ENCODE measurements at regions of chr17 and their contacts with region 1.

Region 1: DNA sequence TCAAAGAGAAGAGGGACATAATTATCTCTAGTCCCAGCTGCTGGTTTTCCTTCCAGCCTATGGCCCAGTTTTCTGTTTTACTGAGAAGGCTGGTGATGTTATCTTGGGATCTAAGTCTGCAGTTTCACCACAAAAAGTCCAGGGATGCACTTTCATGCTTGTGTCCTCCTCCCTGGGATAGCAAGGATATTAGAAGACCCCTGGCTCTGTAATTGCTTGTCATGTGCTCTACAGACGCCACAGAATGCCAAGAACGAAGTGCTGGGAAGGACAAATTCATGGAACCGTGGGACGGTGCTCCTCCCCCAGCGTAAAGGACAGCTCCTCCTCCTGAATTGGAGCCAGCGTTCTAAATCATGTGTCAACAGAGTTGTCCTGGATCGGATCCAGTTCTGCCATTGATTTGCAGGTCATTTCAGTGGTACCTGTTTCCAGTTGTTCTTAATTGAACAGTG is 8.6 kb downstream of the MAPT start:
- DNase-seq: peak; percentile 53 to 74
- ATAC-seq: peak; percentile 38 to 42
- H3K4me3 ChIP-seq: peak overlapping the region in 3 of 4 donors; percentile 3 to 24 (median 22)
- H3K27ac ChIP-seq: peak overlapping the region; percentile 94 to 99 (median 99)
- H3K4me1 ChIP-seq: peaks cover 78 to 89% of the 10 kb centered on the region in 2 donors
- H3K27me3 ChIP-seq: no peaks in the 10 kb centered on the region
- CTCF ChIP-seq: no peak
- POLR2A ChIP-seq: no peak

Region 2: DNA sequence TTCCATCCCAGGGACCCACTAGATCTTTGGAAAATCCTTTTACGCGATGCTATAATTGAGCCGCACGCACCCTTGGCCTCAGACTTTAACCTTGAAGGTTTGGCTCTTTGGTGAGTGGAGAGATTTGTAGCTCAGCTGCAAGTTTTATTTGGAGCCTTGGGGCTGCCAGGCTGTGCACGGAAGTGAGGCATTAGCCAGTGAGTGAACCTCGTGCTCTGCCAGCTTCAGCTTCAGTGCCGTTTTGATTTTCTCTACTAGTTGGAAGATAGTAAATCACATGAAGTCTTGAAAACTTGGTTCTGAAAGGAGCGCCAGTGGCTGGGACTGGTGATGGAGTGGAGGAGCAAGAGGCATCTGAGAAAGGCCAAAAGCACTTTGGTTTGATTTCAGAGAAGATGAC is 101.5 kb before region 1 on chr17:
- in situ Hi-C with region 1: no loop called
- intact Hi-C with region 1: no loop called
- DNase-seq: no peak
- ATAC-seq: no peak
- H3K4me3 ChIP-seq: no peak overlapping the region
- H3K27ac ChIP-seq: no peak overlapping the region
- H3K4me1 ChIP-seq: peaks cover 5 to 8% of the 10 kb centered on the region in 2 donors
- H3K27me3 ChIP-seq: peaks cover 0 to 3% (median 0%) of the 10 kb centered on the region in 3 donors
- CTCF ChIP-seq: no peak
- POLR2A ChIP-seq: no peak

Region 3: DNA sequence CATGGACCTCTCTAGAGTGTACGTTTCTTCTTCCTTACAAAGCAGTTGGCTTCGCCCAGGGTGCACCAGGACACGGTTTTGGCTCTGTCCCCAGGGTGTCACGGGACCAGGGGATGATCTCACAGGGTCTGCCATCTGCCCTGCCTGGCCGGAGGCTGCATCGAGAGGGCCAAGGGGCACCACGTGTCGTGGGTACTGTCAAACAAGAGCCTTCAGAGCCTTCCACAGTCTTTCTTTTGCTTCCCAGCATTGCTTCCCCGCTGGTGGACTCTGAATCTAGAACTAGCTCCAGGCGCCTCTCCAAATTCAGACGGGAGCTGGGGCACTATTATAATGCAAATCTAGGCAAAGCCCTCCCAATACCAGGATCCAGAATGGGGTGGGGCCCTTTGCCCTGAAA is 39.4 kb after region 1 on chr17:
- in situ Hi-C with region 1: loop called in 1 of 4 experiments (anchors 5 kb)
- intact Hi-C with region 1: loop called (anchors 1 kb)
- DNase-seq: peak; percentile 96 to 99
- ATAC-seq: peak; percentile 89 to 93
- H3K4me3 ChIP-seq: peak overlapping the region in 1 of 4 donors; percentile 15
- H3K27ac ChIP-seq: peak overlapping the region; percentile 85 to 94 (median 91)
- H3K4me1 ChIP-seq: peaks cover 65 to 71% of the 10 kb centered on the region in 2 donors
- H3K27me3 ChIP-seq: no peaks in the 10 kb centered on the region
- CTCF ChIP-seq: no peak
- POLR2A ChIP-seq: peak; percentile 8 to 64

Region 4: GRCh38 chr17:45948881-45949624 is 46.1 kb after region 1 on chr17:
- in situ Hi-C with region 1: loop called in 1 of 4 experiments (anchors 5 kb)
- intact Hi-C with region 1: loop called (anchors 2 kb)
- DNase-seq: peak; percentile 51 to 78
- ATAC-seq: peak; percentile 81 to 86
- H3K4me3 ChIP-seq: peak overlapping the region; percentile 0 to 42 (median 37)
- H3K27ac ChIP-seq: peak overlapping the region; percentile 69 to 88 (median 84)
- H3K4me1 ChIP-seq: peaks cover 39 to 42% of the 10 kb centered on the region in 2 donors
- H3K27me3 ChIP-seq: no peaks in the 10 kb centered on the region
- CTCF ChIP-seq: peak; percentile 70 to 91 (median 86)
- POLR2A ChIP-seq: no peak

Measured in gastrocnemius medialis (tissue), 4 donors.